ENCODE measurements at regions of chr3 and their contacts with region 1.

Region 1: DNA sequence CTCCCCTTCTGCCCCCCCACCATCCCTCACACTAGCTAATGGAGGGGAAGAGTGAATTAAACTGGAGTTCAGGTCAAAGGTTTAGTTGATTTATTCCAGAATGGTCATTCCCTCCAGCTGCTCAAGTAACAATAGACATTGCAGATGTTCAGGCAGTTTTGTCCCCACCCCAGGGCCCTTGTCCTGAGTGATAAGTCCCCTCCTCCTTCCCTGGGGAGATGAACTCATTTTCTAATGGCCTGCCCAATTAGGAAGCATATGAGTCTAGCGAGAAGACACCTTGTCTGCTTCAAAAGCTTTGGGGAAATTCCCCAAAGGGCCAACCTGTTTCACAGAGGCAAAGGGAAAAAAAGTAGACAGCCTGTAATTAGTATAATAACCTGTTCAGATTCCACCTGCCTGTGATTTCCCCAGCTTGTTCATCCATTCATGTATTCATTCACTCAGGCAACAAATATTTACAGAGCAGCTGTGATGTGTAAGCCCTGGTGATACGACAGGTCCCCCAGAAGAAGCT is 165.3 kb downstream of the SHQ1 start:
- DNase-seq: no peak
- ATAC-seq: no peak
- H3K4me3 ChIP-seq: no peak overlapping the region
- H3K4me3 Mint-ChIP-seq: no peak overlapping the region
- H3K27ac ChIP-seq: no peak overlapping the region
- H3K27ac Mint-ChIP-seq: no peak overlapping the region
- H3K4me1 ChIP-seq: no peaks in the 10 kb centered on the region
- H3K4me1 Mint-ChIP-seq: no peaks in the 10 kb centered on the region
- H3K27me3 ChIP-seq: no peaks in the 10 kb centered on the region
- H3K27me3 Mint-ChIP-seq: no peaks in the 10 kb centered on the region
- CTCF ChIP-seq: no peak

Region 2: DNA sequence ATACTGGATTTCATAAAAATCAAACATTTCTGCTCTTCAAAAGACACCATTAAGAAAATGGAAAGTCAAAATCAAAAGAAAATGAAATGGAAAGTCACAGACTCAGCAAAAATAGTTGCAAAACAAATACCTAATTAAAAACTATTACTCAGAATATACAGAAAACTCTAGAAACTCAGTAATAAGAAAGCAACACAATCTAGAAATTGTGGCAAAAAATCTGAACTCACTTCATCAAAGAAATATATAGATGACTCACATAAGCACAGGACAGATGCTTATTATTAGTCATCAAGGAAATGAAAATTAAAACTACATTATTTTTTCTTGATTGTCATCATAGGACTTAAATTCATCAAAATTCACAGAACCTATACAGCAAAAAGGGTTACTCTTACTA is 264.8 kb before region 1 on chr3:
- CTCF ChIA-PET with region 1: no interaction called
- POLR2A ChIA-PET with region 1: no interaction called
- intact Hi-C with region 1: no loop called
- DNase-seq: no peak
- ATAC-seq: peak; percentile 24
- H3K4me3 ChIP-seq: no peak overlapping the region
- H3K4me3 Mint-ChIP-seq: no peak overlapping the region
- H3K27ac ChIP-seq: no peak overlapping the region
- H3K27ac Mint-ChIP-seq: no peak overlapping the region
- H3K4me1 ChIP-seq: peaks cover 7% of the 10 kb centered on the region
- H3K4me1 Mint-ChIP-seq: peaks cover 84% of the 10 kb centered on the region
- H3K27me3 ChIP-seq: no peaks in the 10 kb centered on the region
- H3K27me3 Mint-ChIP-seq: no peaks in the 10 kb centered on the region
- CTCF ChIP-seq: no peak

Region 3: DNA sequence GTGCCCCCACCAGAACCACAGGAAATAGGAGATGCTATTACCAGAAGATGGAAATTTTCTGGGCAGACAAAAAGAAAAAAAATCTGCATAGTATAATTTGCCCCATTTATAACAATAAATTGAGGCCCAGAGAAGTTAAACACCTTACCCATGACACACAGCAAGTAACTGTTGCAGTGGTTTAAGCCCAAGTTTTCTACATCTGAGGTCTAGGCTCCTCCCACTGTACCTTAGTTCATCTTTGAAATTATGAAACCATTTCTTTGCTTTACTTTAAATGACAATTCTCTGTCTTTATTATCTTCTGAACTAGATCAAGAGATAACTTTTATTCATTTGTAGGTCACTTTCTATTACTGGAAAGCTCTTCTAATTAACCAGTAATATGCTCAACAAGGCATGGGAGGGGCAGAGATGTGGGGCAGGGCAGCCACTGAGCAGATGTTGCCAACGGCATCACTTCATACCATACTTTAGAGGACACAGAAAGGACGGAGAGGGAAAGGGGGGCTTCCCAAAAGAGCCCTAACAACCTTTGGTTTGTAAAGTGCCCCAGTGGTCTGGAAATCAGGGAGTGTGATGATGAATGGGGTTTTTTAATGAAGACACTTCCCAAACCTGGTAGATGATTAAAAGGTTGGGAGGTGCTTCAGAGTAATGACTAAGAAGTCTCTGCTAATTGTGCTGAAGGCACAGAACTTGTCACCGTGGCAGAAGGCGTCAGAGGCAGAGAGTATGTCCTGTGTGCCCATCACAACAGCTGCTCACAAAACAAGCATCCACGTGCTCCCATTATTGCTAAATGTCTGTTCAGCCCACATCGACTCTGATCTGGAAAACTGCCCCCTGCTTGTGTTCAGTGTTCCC is 177.2 kb before region 1 on chr3:
- CTCF ChIA-PET with region 1: no interaction called
- POLR2A ChIA-PET with region 1: no interaction called
- intact Hi-C with region 1: no loop called
- DNase-seq: no peak
- ATAC-seq: no peak
- H3K4me3 ChIP-seq: no peak overlapping the region
- H3K4me3 Mint-ChIP-seq: no peak overlapping the region
- H3K27ac ChIP-seq: no peak overlapping the region
- H3K27ac Mint-ChIP-seq: no peak overlapping the region
- H3K4me1 ChIP-seq: no peaks in the 10 kb centered on the region
- H3K4me1 Mint-ChIP-seq: no peaks in the 10 kb centered on the region
- H3K27me3 ChIP-seq: no peaks in the 10 kb centered on the region
- H3K27me3 Mint-ChIP-seq: no peaks in the 10 kb centered on the region
- CTCF ChIP-seq: no peak

Region 4: GRCh38 chr3:72728988-72729467 is 46.0 kb after region 1 on chr3:
- CTCF ChIA-PET with region 1: no interaction called
- POLR2A ChIA-PET with region 1: no interaction called
- intact Hi-C with region 1: loop called in 1 of 2 experiments (anchors 5 kb)
- DNase-seq: no peak
- ATAC-seq: no peak
- H3K4me3 ChIP-seq: no peak overlapping the region
- H3K4me3 Mint-ChIP-seq: no peak overlapping the region
- H3K27ac ChIP-seq: no peak overlapping the region
- H3K27ac Mint-ChIP-seq: no peak overlapping the region
- H3K4me1 ChIP-seq: no peaks in the 10 kb centered on the region
- H3K4me1 Mint-ChIP-seq: no peaks in the 10 kb centered on the region
- H3K27me3 ChIP-seq: no peaks in the 10 kb centered on the region
- H3K27me3 Mint-ChIP-seq: no peaks in the 10 kb centered on the region
- CTCF ChIP-seq: no peak

Region 5: GRCh38 chr3:72938471-72939265 is 255.7 kb after region 1 on chr3:
- CTCF ChIA-PET with region 1: no interaction called
- POLR2A ChIA-PET with region 1: no interaction called
- intact Hi-C with region 1: no loop called
- DNase-seq: peak in 5 of 14 experiments; percentile 25 to 75 (median 65)
- ATAC-seq: peak; percentile 100
- H3K4me3 ChIP-seq: no peak overlapping the region
- H3K4me3 Mint-ChIP-seq: no peak overlapping the region
- H3K27ac ChIP-seq: no peak overlapping the region
- H3K27ac Mint-ChIP-seq: no peak overlapping the region
- H3K4me1 ChIP-seq: no peaks in the 10 kb centered on the region
- H3K4me1 Mint-ChIP-seq: no peaks in the 10 kb centered on the region
- H3K27me3 ChIP-seq: no peaks in the 10 kb centered on the region
- H3K27me3 Mint-ChIP-seq: no peaks in the 10 kb centered on the region
- CTCF ChIP-seq: peak; percentile 77

Measured in CD4-positive, alpha-beta T cell (primary cell).